Activated naive CD4-positive, alpha-beta T cell treated with anti-CD3 and anti-CD28 coated beads for 36 hours (primary cell): ENCODE measurements at regions of chrX and their contacts with region 1.

Region 1: GRCh38 chrX:136694431-136695087 is 46.6 kb downstream of the CD40LG start:
- DNase-seq: peak; percentile 45
- H3K4me3 Mint-ChIP-seq: peak overlapping the region; percentile 76
- H3K27ac Mint-ChIP-seq: peak overlapping the region; percentile 99
- H3K4me1 Mint-ChIP-seq: peaks cover 73% of the 10 kb centered on the region
- H3K27me3 Mint-ChIP-seq: no peaks in the 10 kb centered on the region

Region 2: DNA sequence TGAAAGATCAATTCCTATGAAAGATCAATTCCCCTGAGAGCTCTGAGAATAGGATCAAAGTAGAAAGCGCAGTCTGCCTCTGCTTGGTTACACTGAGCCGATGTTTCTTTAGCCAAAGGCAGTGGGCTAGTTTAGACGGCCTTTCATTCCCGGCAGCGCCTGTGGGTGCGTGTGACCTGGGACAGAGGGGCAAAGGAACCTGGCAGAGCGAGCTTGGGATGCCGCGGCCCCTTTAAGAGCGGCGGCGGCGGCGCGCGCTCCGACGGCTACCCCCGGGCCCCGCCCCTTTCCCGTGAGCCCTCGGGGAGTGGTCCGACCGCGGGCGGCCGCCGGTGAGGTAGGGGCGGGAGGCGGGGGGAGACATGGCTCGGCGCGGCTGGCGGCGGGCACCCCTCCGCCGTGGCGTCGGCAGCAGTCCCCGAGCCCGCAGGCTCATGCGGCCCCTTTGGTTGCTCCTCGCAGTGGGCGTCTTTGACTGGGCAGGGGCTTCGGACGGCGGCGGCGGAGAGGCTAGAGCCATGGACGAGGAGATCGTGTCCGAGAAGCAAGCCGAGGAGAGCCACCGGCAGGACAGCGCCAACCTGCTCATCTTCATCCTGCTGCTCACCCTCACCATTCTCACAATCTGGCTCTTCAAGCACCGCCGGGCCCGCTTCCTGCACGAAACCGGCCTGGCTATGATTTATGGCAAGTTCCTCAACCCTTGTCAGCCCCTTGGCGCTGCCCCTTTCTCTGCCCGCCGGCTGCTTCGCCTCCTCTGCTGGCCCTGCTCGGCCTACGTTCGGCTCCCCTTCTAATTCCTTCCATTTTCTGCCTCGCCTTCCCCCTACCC is 709.2 kb before region 1 on chrX and contains the start of gene SLC9A6:
- CTCF ChIA-PET with region 1: no interaction called
- intact Hi-C with region 1: loop called (anchors 10 kb)
- DNase-seq: peak; percentile 63
- H3K4me3 Mint-ChIP-seq: peak within 1 kb of the TSS; percentile 85
- H3K27ac Mint-ChIP-seq: peak within 1 kb of the TSS; percentile 77
- H3K4me1 Mint-ChIP-seq: peaks cover 50% of the 10 kb centered on the region
- H3K27me3 Mint-ChIP-seq: no peaks in the 10 kb centered on the region
- total RNA-seq, gene SLC9A6: 9.7 to 10.0 TPM

Region 3: DNA sequence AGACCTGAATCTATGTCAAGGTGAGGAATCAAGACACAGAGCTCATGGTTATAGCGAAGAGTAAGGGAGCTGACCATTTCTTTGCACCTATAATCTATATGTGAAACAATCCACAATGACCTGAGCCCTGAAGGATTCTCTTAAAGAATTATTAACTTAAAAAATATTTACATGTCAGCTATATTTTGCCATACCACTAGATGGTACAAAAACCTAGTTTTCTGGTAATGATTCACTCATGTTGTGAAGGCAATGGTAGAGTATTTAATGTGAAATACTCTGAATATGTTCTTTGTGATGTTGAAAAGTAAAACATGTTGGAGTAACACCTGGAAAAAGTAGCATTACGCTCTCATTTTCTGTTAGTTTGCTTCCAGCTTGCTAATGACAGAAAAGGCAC is 122.5 kb before region 1 on chrX:
- CTCF ChIA-PET with region 1: interaction called, 24 read pairs
- intact Hi-C with region 1: loop called (anchors 1 kb)
- DNase-seq: no peak
- H3K4me3 Mint-ChIP-seq: no peak overlapping the region
- H3K27ac Mint-ChIP-seq: no peak overlapping the region
- H3K4me1 Mint-ChIP-seq: peaks cover 18% of the 10 kb centered on the region
- H3K27me3 Mint-ChIP-seq: no peaks in the 10 kb centered on the region

Region 4: DNA sequence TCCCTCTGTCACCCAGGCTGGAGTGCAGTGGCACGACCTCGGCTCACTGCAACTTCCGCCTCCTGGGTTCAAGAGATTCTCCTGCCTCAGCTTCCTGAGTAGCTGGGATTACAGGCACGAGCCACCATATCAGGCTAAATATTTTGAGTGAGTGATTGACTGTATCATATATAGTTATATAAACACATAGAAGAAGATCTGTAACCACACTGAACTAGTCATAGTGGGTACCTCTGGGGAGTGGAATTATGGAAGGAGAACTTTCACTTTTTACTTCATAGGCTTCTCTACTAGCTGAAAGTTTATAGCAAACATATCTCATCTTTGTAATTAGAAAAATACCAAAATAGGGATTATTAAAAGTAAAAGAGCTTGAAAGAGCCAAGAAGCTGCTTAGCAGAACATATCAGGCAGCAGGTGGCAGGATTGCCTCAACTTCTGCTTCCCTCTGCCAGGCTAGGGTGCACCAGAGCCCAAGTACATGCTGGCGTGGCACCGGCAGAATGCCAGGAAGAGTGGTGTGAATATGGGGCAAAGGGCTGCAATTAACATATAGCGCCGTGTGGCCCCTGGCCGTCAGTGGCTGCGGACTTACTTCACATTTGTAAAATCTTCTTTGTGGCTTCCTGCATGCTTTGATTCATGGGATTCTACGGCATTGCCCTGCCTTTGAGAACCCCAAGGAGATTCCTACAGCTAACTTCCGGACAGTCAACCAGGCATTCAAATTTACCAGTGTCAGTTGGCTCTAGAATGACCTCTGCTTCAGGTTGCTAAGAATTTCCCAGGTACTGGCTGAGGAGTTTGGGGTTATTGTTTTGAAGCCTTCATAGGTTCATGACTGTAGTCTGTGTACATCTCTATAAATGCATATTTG is 86.0 kb before region 1 on chrX:
- CTCF ChIA-PET with region 1: interaction called, 53 read pairs
- intact Hi-C with region 1: loop called (anchors 1 kb)
- DNase-seq: peak; percentile 80
- H3K4me3 Mint-ChIP-seq: peak overlapping the region; percentile 46
- H3K27ac Mint-ChIP-seq: peak overlapping the region; percentile 79
- H3K4me1 Mint-ChIP-seq: peaks cover 54% of the 10 kb centered on the region
- H3K27me3 Mint-ChIP-seq: no peaks in the 10 kb centered on the region

Region 5: GRCh38 chrX:136652822-136653723 is 41.5 kb before region 1 on chrX:
- CTCF ChIA-PET with region 1: interaction called, 5 read pairs
- intact Hi-C with region 1: loop called (anchors 1 kb)
- DNase-seq: peak; percentile 51
- H3K4me3 Mint-ChIP-seq: peak overlapping the region; percentile 96
- H3K27ac Mint-ChIP-seq: peak overlapping the region; percentile 100
- H3K4me1 Mint-ChIP-seq: peaks cover 34% of the 10 kb centered on the region
- H3K27me3 Mint-ChIP-seq: no peaks in the 10 kb centered on the region